Activated T-helper 1 cell treated with anti-CD3 and anti-CD28 coated beads, Interleukin-12 subunit alpha, Interleukin-12 subunit beta, Interleukin-2, Interleukin-4 antibody, amounts not matched to agents 30 ng/mL and 10 ng/mL and 1 ng/mL, durations not matched to agents 14 hours and 24 hours and 36 hours (primary cell): ENCODE measurements at regions of chr2 and their contacts with region 1.

Region 1: DNA sequence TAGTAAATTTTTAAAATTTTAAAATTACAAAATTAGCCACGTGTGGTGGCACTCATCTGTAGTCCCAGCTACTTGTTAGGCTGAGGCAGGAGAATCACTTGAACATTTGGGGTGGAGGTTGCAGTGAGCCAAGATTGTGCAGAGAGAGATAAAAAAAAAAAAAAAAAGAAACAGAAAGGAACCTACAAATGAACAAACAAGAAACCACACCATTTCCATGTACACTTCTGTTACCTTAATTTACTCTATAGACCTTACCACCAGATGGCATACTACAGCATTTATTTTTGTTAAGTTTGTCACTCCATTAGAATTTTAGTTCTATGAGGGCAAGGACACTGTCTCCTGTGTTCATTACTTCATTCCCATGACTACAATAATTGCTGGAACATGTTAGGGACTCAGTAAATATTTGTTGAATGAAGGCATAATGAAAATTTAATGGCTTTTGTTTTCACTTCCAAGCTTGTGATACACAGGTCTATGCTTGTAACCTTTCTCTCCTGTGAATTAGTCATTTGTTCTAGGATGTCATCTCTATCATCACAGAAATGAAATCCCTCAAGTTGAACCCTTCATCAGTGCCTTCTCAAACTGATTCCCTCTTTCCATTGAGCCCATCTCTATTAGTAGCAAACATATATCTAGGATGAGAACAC is 76.0 kb downstream of the ARHGAP15 start:
- DNase-seq: no peak
- H3K4me3 Mint-ChIP-seq: no peak overlapping the region
- H3K27ac Mint-ChIP-seq: peak overlapping the region; percentile 41
- H3K4me1 Mint-ChIP-seq: peaks cover 44% of the 10 kb centered on the region
- H3K27me3 Mint-ChIP-seq: no peaks in the 10 kb centered on the region

Region 2: DNA sequence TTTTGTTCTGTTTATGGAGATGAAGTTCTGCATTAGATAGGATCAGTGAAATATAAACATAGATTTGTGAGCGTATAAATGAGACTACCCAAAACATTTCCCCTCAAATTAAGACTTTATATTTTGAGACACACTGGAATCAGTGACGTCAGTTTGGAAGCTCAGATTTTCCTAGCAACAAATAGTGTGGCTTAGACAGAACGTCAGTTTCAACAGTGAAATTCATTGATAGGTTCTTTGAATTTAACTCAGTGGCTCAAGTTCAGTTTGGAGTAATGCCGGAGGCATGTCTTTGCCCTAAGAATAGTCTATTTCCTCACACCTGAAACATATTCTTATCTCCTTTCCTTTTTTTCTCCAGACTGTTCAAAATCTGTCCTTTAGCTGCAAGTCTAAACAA is 189.6 kb before region 1 on chr2:
- intact Hi-C with region 1: no loop called
- DNase-seq: no peak
- H3K4me3 Mint-ChIP-seq: no peak overlapping the region
- H3K27ac Mint-ChIP-seq: no peak overlapping the region
- H3K4me1 Mint-ChIP-seq: no peaks in the 10 kb centered on the region
- H3K27me3 Mint-ChIP-seq: peaks cover 26% of the 10 kb centered on the region

Region 3: DNA sequence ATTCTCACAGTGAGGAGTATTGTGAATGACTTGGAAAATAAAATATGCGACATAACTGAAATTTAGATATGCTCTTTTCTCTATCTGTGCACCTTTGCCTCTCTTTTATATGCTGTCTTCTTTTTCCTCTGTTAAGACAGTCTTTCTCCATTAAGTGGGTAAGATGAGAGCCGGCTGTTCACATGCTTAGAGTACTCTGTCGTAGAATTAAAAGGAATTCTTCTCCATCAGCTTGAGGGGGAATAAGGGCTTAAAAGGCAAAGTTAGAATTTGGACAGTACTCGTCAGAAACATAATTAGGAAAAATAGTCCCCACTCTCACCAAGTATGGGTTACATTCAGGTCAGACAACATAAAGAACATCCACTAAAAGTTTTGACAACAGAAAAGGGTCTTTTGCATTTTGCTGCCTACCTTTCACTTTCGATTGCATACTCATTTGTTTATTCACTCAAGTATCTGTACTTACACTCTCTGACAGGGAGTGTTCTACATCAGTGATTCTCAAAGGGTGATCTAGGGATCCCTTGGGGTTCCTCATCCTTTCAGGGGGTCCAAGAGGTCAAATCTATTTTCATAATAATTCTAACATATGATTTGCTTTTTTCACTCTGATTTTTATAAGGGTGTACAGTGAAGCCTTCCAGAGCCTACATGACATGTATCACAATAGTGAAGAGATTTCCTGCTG is 28.0 kb before region 1 on chr2:
- intact Hi-C with region 1: loop called (anchors 2 kb)
- DNase-seq: no peak
- H3K4me3 Mint-ChIP-seq: peak overlapping the region; percentile 78
- H3K27ac Mint-ChIP-seq: peak overlapping the region; percentile 85
- H3K4me1 Mint-ChIP-seq: peaks cover 53% of the 10 kb centered on the region
- H3K27me3 Mint-ChIP-seq: no peaks in the 10 kb centered on the region

Region 4: DNA sequence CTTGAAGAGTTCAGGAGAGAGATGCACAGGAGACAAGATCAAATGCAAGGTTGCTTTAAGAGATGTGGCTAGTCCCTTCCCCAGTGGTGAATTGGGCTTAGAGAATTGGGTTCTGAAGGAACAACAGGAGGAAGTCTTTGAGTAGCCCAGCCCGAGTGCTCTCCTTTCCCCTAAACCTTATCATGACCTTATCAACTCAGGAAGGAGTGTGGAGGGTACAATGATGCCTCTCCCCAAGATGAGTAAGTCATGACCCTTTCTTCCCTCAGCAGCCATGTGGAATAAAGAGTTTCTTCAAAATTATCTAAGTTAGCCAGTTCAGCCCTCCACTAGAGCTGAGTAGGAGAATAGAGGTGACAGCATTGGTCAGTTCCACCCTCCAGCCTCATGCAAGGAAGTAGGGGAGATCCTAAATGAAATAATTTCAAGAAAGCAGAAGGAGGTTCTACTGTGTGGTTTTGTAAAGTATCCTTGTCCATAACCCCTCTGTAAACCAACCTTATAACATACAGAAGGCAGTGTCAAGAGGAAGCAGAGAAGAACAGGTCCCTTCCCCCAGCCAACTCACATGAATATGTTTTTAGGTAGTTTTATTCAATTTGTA is 12.4 kb after region 1 on chr2:
- intact Hi-C with region 1: loop called (anchors 1 kb)
- DNase-seq: no peak
- H3K4me3 Mint-ChIP-seq: no peak overlapping the region
- H3K27ac Mint-ChIP-seq: peak overlapping the region; percentile 61
- H3K4me1 Mint-ChIP-seq: peaks cover 51% of the 10 kb centered on the region
- H3K27me3 Mint-ChIP-seq: no peaks in the 10 kb centered on the region